Activated naive CD8-positive, alpha-beta T cell treated with anti-CD3 and anti-CD28 coated beads, Interleukin-2, amount 10 ng/mL, durations not matched to agents 7 days and 5 days (primary cell): ENCODE measurements at regions of chr14 and their contacts with region 1.

Region 1: GRCh38 chr14:74881431-74882361 is at the start of gene DLST:
- DNase-seq: peak; percentile 93
- ATAC-seq: peak; percentile 89
- H3K4me3 Mint-ChIP-seq: peak within 1 kb of the TSS; percentile 100
- H3K27ac Mint-ChIP-seq: peak within 1 kb of the TSS; percentile 99
- H3K4me1 Mint-ChIP-seq: peaks cover 51% of the 10 kb centered on the region
- H3K27me3 Mint-ChIP-seq: no peaks in the 10 kb centered on the region
- total RNA-seq, gene DLST: 111 to 124 TPM

Region 2: GRCh38 chr14:74860906-74861733 is 20.6 kb before region 1 on chr14:
- POLR2A ChIA-PET with region 1: interaction called, 13 read pairs
- DNase-seq: peak; percentile 93
- ATAC-seq: peak; percentile 82
- H3K4me3 Mint-ChIP-seq: no peak overlapping the region
- H3K27ac Mint-ChIP-seq: no peak overlapping the region
- H3K4me1 Mint-ChIP-seq: peaks cover 2% of the 10 kb centered on the region
- H3K27me3 Mint-ChIP-seq: no peaks in the 10 kb centered on the region

Region 3: DNA sequence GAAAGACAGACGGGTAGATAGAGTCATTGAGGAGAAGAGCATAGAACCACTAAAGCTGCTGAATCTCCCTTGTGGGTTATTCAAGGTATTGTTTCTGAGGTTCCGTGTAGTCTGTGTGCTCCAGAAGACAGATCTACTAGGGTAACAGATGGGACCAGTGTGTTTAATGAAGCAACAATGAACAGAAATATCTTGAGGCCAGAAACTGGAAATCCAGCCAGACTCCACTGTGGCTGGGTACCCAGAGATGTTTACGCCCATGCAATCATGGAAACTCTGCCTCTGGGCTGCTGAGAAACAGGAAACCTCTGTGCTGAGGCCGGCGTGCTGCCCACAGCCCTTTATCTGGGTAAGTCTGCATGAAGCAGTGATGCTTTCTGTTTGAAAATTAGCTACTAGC is 14.0 kb before region 1 on chr14:
- POLR2A ChIA-PET with region 1: interaction called, 52 read pairs
- DNase-seq: peak; percentile 69
- ATAC-seq: peak; percentile 96
- H3K4me3 Mint-ChIP-seq: peak overlapping the region; percentile 39
- H3K27ac Mint-ChIP-seq: peak overlapping the region; percentile 85
- H3K4me1 Mint-ChIP-seq: peaks cover 21% of the 10 kb centered on the region
- H3K27me3 Mint-ChIP-seq: no peaks in the 10 kb centered on the region

Region 4: DNA sequence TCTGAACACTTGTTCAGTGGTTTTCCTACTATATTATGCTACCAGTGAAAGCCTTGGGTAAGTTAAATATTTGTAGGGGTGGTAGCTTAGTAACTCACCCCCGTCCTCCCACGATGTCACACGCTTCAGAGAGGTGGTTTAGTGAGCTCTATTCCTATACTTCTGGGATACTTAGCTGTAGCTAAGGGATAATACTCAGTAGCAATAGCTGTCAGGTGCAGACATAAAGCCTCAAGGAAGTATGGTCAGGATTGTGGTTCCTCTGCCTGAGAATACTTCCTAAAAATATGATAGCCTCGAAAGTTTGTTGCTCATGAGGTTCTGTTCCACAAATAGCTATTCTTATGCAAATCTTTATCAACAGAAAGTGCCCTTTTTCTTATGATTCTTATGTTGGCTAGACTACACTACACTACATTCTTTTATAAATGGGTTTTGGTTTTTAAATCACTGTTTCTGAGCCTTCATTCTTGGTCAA is 12.0 kb after region 1 on chr14:
- POLR2A ChIA-PET with region 1: interaction called, 26 read pairs
- DNase-seq: no peak
- ATAC-seq: no peak
- H3K4me3 Mint-ChIP-seq: no peak overlapping the region
- H3K27ac Mint-ChIP-seq: no peak overlapping the region
- H3K4me1 Mint-ChIP-seq: peaks cover 9% of the 10 kb centered on the region
- H3K27me3 Mint-ChIP-seq: no peaks in the 10 kb centered on the region

Region 5: GRCh38 chr14:74898694-74899093 is 17.0 kb after region 1 on chr14:
- POLR2A ChIA-PET with region 1: interaction called, 26 read pairs
- DNase-seq: no peak
- ATAC-seq: no peak
- H3K4me3 Mint-ChIP-seq: no peak overlapping the region
- H3K27ac Mint-ChIP-seq: no peak overlapping the region
- H3K4me1 Mint-ChIP-seq: peaks cover 6% of the 10 kb centered on the region
- H3K27me3 Mint-ChIP-seq: no peaks in the 10 kb centered on the region

Region 6: GRCh38 chr14:74905375-74906142 is 23.9 kb after region 1 on chr14:
- POLR2A ChIA-PET with region 1: interaction called, 26 read pairs
- DNase-seq: peak; percentile 82
- ATAC-seq: peak; percentile 35
- H3K4me3 Mint-ChIP-seq: no peak overlapping the region
- H3K27ac Mint-ChIP-seq: peak overlapping the region; percentile 38
- H3K4me1 Mint-ChIP-seq: peaks cover 15% of the 10 kb centered on the region
- H3K27me3 Mint-ChIP-seq: no peaks in the 10 kb centered on the region